Heart left ventricle (tissue), 16 donors: ENCODE measurements at regions of chr13 and their contacts with region 1.

Region 1: DNA sequence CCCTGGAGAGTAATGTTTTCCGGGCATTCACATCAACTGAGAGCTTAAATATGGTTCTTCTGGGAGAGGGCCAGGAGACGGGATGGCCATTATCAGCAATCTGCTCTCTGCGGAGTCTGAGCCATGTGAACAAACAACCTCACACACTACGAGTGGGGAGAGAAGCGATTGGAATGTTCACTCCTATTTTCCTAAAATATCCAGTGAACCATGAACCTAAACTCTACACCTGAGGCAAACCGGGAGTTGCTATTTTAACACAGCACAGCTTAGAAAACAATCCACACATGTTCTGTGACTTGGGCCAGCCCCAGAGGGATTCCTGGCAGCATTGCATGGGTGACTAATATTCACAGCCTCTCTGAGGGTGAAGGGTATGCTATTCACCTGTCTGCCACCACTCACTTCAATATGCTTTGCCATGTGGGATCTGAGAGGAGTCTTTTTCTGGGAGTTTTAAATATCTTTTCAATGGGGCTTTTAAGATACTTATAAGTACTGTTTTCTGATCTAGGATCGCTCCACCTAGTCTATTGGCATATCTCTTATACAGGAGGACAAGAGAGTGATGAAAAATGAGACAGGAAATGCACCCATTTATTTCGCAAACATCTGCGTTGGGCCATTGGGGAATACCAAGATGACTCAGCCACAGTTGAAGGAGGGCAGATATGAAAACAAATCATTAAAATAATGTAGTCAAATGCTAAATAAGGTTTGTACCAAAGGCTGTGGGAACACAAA is 72.6 kb upstream of the SERP2 start:
- DNase-seq: peak in 4 of 5 donors; percentile 54 to 66 (median 62)
- ATAC-seq: peak; percentile 67 to 91 (median 88)
- H3K4me3 ChIP-seq: no peak overlapping the region
- H3K27ac ChIP-seq: peak overlapping the region; percentile 48 to 87 (median 72)
- H3K4me1 ChIP-seq: peaks cover 8 to 66% (median 55%) of the 10 kb centered on the region in 12 donors
- H3K27me3 ChIP-seq: no peaks in the 10 kb centered on the region
- CTCF ChIP-seq: peak in 1 of 12 donors; percentile 6
- POLR2A ChIP-seq: no peak

Region 2: GRCh38 chr13:44141725-44142539 is 159.1 kb before region 1 on chr13:
- intact Hi-C with region 1: loop called in 1 of 10 experiments (anchors 10 kb)
- DNase-seq: peak; percentile 98 to 100 (median 98)
- ATAC-seq: peak; percentile 99 to 100 (median 100)
- H3K4me3 ChIP-seq: peak overlapping the region; percentile 28 to 73 (median 58)
- H3K27ac ChIP-seq: peak overlapping the region; percentile 86 to 99 (median 96)
- H3K4me1 ChIP-seq: peaks cover 0 to 21% (median 9%) of the 10 kb centered on the region in 12 donors
- H3K27me3 ChIP-seq: no peaks in the 10 kb centered on the region
- CTCF ChIP-seq: peak in 1 of 12 donors; percentile 16
- POLR2A ChIP-seq: peak; percentile 84 to 94

Region 3: GRCh38 chr13:44197791-44198770 is 103.0 kb before region 1 on chr13:
- intact Hi-C with region 1: loop called in 1 of 10 experiments (anchors 5 kb)
- DNase-seq: no peak
- ATAC-seq: peak in 3 of 4 donors; percentile 35 to 52 (median 36)
- H3K4me3 ChIP-seq: no peak overlapping the region
- H3K27ac ChIP-seq: no peak overlapping the region
- H3K4me1 ChIP-seq: peaks cover 0 to 23% (median 3%) of the 10 kb centered on the region in 12 donors
- H3K27me3 ChIP-seq: no peaks in the 10 kb centered on the region
- CTCF ChIP-seq: no peak
- POLR2A ChIP-seq: no peak